ENCODE measurements at regions of chr16 and their contacts with region 1.

Region 1: DNA sequence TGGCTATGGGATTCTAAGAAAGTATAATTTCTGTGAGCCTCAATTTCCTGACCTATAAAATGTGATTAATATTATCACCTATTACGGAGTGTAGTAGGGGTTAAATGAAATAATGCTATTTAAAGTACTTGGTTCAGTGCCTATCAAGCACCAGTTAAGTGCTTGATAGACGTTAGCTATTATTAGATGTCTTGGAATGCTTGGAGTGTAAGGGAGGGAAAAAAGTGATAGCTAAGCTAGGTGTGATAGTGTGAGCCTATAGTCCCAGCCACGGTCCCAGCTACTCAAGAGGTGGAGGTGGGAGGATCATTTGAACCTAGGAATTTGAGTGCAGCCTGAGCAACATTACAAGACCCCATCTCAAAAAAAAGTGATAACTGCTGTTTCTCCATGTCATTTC is 7.5 kb downstream of the ORC6 start:
- DNase-seq: no peak
- H3K4me3 ChIP-seq: no peak overlapping the region
- H3K27ac ChIP-seq: no peak overlapping the region
- H3K4me1 ChIP-seq: no peaks in the 10 kb centered on the region
- H3K27me3 ChIP-seq: no peaks in the 10 kb centered on the region
- CTCF ChIP-seq: no peak
- EP300 ChIP-seq: no peak
- POLR2A ChIP-seq: no peak

Region 2: DNA sequence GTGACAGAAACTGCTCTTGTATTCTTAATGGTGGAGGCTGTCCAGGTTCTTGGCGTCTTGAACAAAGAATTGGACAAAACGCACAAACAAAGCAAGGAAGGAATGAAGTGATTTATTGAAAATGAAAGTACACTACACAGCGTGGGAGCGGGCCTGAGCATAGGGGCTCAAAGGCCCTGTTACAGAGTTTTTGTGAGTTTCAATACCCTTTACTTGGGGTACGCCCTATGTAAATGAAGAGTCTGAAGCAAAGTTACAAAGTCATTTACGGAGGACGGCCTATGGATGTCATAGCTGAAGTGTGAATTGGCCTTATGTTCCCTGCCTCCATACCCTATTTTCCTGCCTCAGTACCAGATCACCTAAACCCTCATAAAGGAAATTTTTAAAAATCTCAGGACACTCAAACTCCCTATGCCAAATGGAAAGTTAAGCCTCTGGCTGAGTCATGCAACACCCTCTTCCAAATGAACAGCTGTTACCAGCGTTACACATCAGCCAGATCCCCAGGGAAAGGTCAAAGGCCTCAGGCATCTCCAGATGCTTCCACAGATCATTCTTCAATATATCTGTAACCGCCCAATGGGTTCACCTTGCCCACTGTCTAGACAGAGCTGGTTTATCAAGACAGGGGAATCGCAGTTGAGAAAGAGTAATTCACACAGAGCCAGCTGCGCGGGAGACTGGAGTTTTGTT is 46.9 kb before region 1 on chr16:
- intact Hi-C with region 1: loop called in 1 of 4 experiments (anchors 1 kb)
- DNase-seq: no peak
- H3K4me3 ChIP-seq: peak overlapping the region; percentile 10
- H3K27ac ChIP-seq: no peak overlapping the region
- H3K4me1 ChIP-seq: no peaks in the 10 kb centered on the region
- H3K27me3 ChIP-seq: no peaks in the 10 kb centered on the region
- CTCF ChIP-seq: no peak
- EP300 ChIP-seq: no peak
- POLR2A ChIP-seq: no peak

Region 3: DNA sequence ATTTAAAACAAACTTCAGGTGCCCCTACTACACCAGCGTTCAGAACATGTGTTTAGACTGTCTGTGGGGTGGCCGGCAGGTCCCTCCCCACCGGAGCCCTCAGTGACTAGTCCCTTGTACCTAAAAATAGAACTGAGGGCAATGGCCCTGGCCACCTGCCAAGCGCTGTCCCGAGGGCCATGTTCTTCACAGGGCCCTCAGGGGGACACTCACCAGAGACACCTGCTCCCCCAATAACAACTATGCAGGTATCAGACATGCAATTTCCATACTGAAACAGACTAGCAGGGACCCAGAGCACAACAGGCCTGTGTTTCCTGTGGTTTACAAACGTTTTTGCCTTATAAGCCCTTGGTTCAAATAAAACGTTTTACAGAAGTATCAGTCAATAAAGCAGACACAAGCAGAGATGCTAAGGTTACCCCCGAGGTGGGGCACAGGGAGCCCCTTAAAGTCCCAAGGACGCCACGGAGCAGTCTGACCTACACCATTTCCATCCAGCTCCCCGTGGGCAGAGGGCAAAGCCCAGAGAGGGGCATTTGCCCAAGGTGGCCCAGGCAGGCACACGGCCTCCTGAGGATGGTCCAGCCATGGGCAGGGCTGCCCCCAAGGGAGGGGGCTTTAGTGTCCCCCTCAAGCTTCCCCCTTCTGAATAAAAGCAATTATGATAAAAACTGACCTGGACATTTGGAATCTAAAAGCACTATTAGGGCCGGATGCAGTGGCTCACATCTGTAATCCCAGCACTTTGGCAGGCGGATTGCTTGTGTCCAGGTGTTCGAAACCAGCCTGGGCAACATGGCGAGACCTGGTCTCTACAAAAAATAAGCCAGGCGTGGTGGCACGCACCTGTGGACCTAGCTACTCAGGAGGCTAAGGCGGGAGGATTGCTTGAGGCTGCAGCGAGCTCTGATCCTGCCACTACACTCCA is 52.1 kb after region 1 on chr16:
- intact Hi-C with region 1: no loop called
- DNase-seq: no peak
- H3K4me3 ChIP-seq: no peak overlapping the region
- H3K27ac ChIP-seq: no peak overlapping the region
- H3K4me1 ChIP-seq: no peaks in the 10 kb centered on the region
- H3K27me3 ChIP-seq: no peaks in the 10 kb centered on the region
- CTCF ChIP-seq: no peak
- EP300 ChIP-seq: no peak
- POLR2A ChIP-seq: no peak